PC-3 (cell line): ENCODE measurements at regions of chr20 and their contacts with region 1.

Region 1: GRCh38 chr20:1567392-1568162 is 10.1 kb upstream of the SIRPD start:
- DNase-seq: peak; percentile 99
- ATAC-seq: peak; percentile 79
- H3K4me3 ChIP-seq: no peak overlapping the region
- H3K27ac ChIP-seq: peak overlapping the region; percentile 98
- H3K4me1 ChIP-seq: peaks cover 47% of the 10 kb centered on the region
- H3K27me3 ChIP-seq: no peaks in the 10 kb centered on the region
- CTCF ChIP-seq: no peak

Region 2: GRCh38 chr20:1415667-1416468 is 151.7 kb before region 1 on chr20:
- CTCF ChIA-PET with region 1: no interaction called
- POLR2A ChIA-PET with region 1: no interaction called
- intact Hi-C with region 1: no loop called
- DNase-seq: peak; percentile 99
- ATAC-seq: peak; percentile 83
- H3K4me3 ChIP-seq: peak overlapping the region; percentile 55; the same call in 1 of the 2 replicates
- H3K27ac ChIP-seq: peak overlapping the region; percentile 81
- H3K4me1 ChIP-seq: peaks cover 54% of the 10 kb centered on the region
- H3K27me3 ChIP-seq: no peaks in the 10 kb centered on the region
- CTCF ChIP-seq: no peak

Region 3: GRCh38 chr20:1595333-1595732 is 27.8 kb after region 1 on chr20:
- CTCF ChIA-PET with region 1: no interaction called
- POLR2A ChIA-PET with region 1: no interaction called
- intact Hi-C with region 1: no loop called
- DNase-seq: no peak
- ATAC-seq: no peak
- H3K4me3 ChIP-seq: no peak overlapping the region
- H3K27ac ChIP-seq: no peak overlapping the region
- H3K4me1 ChIP-seq: no peaks in the 10 kb centered on the region
- H3K27me3 ChIP-seq: no peaks in the 10 kb centered on the region
- CTCF ChIP-seq: no peak

Region 4: GRCh38 chr20:1623501-1624265 is 56.1 kb after region 1 on chr20:
- CTCF ChIA-PET with region 1: no interaction called
- POLR2A ChIA-PET with region 1: no interaction called
- intact Hi-C with region 1: loop called (anchors 2 kb)
- DNase-seq: peak; percentile 1
- ATAC-seq: no peak
- H3K4me3 ChIP-seq: no peak overlapping the region
- H3K27ac ChIP-seq: peak overlapping the region; percentile 65
- H3K4me1 ChIP-seq: peaks cover 31% of the 10 kb centered on the region
- H3K27me3 ChIP-seq: no peaks in the 10 kb centered on the region
- CTCF ChIP-seq: no peak